Colonic mucosa (tissue), 4 donors: ENCODE measurements at regions of chr3 and their contacts with region 1.

Region 1: DNA sequence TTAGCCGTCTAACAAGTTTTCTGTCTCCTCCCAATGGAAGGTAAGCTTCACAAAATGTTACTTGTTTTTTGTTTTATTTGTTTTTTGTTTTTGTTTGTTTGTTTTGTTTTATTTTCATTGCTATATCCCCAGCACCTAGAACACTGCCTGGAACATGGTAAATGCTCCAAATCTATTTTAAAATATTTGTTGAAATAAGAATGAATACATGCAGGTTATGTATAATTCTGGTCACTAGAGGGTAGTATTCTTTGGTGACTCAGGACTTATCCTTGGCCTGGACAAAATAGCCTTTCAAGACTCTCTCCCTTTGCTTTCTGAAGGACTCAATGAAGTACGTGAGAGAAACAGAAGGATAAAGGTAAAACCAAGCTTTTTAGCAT is 47.0 kb upstream of the PPP2R3A start:
- DNase-seq: no peak
- H3K4me3 ChIP-seq: no peak overlapping the region
- H3K27ac ChIP-seq: no peak overlapping the region
- H3K4me1 ChIP-seq: no peaks in the 10 kb centered on the region
- H3K27me3 ChIP-seq: no peaks in the 10 kb centered on the region
- CTCF ChIP-seq: peak; percentile 29

Region 2: GRCh38 chr3:136042608-136043221 is 124.1 kb after region 1 on chr3:
- intact Hi-C with region 1: loop called (anchors 2 kb)
- DNase-seq: no peak
- H3K4me3 ChIP-seq: no peak overlapping the region
- H3K27ac ChIP-seq: no peak overlapping the region
- H3K4me1 ChIP-seq: no peaks in the 10 kb centered on the region
- H3K27me3 ChIP-seq: no peaks in the 10 kb centered on the region
- CTCF ChIP-seq: no peak

Region 3: DNA sequence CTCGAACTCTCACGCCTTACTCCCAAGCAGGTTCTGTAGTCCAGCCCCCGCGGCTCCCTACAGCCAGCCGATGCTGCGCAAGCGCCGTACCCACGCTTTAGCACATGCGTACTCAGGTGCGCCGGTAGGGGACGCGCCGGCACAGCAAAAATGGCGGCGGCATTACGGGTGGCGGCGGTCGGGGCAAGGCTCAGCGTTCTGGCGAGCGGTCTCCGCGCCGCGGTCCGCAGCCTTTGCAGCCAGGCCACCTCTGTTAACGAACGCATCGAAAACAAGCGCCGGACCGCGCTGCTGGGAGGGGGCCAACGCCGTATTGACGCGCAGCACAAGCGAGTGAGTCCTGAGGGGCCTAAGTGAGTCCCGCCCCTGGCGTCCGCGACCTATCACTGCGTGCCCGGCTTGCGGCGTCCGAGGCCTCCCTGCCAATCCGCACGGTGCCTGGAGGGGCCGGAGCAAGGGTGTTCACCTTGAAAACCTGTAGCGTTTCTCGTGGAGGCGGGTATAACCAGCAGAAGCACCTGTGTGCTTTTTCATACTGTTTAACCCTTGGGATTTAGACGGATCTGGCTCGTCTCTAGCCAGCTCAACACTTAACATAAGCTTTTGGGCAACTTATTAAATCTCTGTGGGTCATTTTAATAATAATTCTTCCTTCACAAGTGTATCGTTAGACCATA is 331.8 kb after region 1 on chr3 and contains the start of gene PCCB:
- intact Hi-C with region 1: no loop called
- DNase-seq: peak; percentile 97
- H3K4me3 ChIP-seq: peak within 1 kb of the TSS; percentile 55
- H3K27ac ChIP-seq: peak within 1 kb of the TSS; percentile 92
- H3K4me1 ChIP-seq: peaks cover 8% of the 10 kb centered on the region
- H3K27me3 ChIP-seq: no peaks in the 10 kb centered on the region
- CTCF ChIP-seq: peak; percentile 85
- total RNA-seq, gene PCCB: 60.0 to 67.0 TPM